Right ventricle myocardium inferior (tissue), 1 donor: ENCODE measurements at regions of chr1 and their contacts with region 1.

Region 1: DNA sequence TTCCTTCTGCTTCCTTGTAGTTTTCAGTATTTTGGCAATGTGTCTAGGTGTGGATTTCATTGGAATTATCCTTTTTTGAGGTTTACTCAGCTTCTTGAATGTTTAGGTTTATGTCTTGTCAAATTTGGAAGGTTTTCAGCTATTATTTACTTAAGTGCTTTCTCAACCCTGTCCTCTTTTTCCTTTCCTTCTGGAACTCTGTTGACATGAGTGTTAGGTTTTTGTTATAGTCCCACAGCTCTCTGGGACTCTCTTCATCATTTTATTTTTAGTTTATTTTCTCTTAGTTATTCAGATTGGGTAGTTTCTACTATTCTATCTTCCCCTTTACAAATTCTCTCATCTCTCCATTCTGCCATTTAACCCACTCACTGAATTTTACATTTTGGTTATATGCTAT is 63.1 kb upstream of the GPR88 start:
- DNase-seq: no peak
- ATAC-seq: no peak

Region 2: DNA sequence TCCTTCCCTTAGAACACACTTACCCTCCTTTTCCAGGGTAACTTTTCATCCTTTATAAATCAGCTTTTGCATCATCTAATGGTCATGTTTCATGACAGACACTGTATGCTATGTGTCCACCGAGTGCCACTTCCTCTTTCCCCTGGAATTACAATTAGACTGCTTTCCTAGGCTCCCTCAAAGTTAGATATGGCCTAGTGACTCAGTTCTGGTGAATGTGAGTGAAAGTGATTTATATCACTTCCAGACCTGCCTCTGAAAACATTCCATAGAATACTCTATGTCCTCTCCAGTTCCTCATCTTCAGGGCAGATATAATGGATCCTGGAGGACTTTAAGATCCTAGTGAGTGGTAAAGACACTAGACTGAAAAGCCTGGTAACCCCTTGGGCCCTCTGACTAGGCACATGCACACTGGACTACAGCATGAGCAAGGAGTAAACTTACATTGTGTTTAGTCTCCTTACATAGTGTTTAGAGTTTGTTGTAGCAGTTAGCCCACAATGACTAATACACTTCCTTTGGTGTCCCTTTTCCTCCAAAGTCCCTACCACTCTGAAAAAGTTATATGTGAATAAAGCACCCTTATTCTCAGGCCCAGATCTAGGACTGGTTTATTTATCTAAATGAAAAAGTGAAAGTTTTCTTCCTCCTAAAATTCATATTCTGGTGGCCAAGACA is 122.4 kb after region 1 on chr1:
- intact Hi-C with region 1: loop called (anchors 10 kb)
- DNase-seq: no peak
- ATAC-seq: no peak